ENCODE measurements at regions of chr22 and their contacts with region 1.

Region 1: DNA sequence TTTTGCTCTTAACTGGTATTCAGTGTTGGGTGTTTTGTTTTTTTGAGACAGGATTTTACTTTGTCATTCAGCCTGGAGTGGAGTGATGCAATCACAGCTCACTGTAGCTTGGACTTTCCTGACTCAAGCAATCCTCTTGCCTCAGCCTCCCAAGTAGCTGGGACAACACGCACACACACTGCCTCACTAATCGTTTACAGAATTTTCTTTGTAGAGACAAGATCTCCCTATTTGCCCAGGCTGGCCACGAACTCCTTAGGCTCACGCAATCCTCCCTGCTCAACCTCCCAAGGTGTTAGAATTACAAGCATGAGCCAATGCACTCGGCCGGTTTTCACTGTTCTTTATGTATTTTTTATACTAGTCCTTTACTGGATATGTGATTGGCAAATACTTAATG is 51.0 kb upstream of the IGLL5 start:
- DNase-seq: peak; percentile 42
- H3K4me3 Mint-ChIP-seq: no peak overlapping the region
- H3K27ac Mint-ChIP-seq: no peak overlapping the region
- H3K4me1 Mint-ChIP-seq: peaks cover 4% of the 10 kb centered on the region
- H3K27me3 Mint-ChIP-seq: peaks cover 78% of the 10 kb centered on the region
- CTCF ChIP-seq: no peak

Region 2: GRCh38 chr22:22687638-22688500 is 148.8 kb before region 1 on chr22:
- CTCF ChIA-PET with region 1: no interaction called
- POLR2A ChIA-PET with region 1: no interaction called
- intact Hi-C with region 1: no loop called
- DNase-seq: peak; percentile 63
- H3K4me3 Mint-ChIP-seq: no peak overlapping the region
- H3K27ac Mint-ChIP-seq: no peak overlapping the region
- H3K4me1 Mint-ChIP-seq: peaks cover 11% of the 10 kb centered on the region
- H3K27me3 Mint-ChIP-seq: no peaks in the 10 kb centered on the region
- CTCF ChIP-seq: peak; percentile 71

Region 3: GRCh38 chr22:22817468-22818201 is 19.0 kb before region 1 on chr22:
- CTCF ChIA-PET with region 1: no interaction called
- POLR2A ChIA-PET with region 1: no interaction called
- intact Hi-C with region 1: no loop called
- DNase-seq: no peak
- H3K4me3 Mint-ChIP-seq: no peak overlapping the region
- H3K27ac Mint-ChIP-seq: no peak overlapping the region
- H3K4me1 Mint-ChIP-seq: no peaks in the 10 kb centered on the region
- H3K27me3 Mint-ChIP-seq: peaks cover 44% of the 10 kb centered on the region
- CTCF ChIP-seq: no peak

Region 4: GRCh38 chr22:22848364-22848866 is 11.8 kb after region 1 on chr22:
- CTCF ChIA-PET with region 1: interaction called, 20 read pairs
- POLR2A ChIA-PET with region 1: no interaction called
- intact Hi-C with region 1: no loop called
- DNase-seq: peak; percentile 69
- H3K4me3 Mint-ChIP-seq: no peak overlapping the region
- H3K27ac Mint-ChIP-seq: no peak overlapping the region
- H3K4me1 Mint-ChIP-seq: no peaks in the 10 kb centered on the region
- H3K27me3 Mint-ChIP-seq: peaks cover 73% of the 10 kb centered on the region
- CTCF ChIP-seq: peak; percentile 75